Posterior vena cava (tissue), 2 donors: ENCODE measurements at regions of chr5 and their contacts with region 1.

Region 1: DNA sequence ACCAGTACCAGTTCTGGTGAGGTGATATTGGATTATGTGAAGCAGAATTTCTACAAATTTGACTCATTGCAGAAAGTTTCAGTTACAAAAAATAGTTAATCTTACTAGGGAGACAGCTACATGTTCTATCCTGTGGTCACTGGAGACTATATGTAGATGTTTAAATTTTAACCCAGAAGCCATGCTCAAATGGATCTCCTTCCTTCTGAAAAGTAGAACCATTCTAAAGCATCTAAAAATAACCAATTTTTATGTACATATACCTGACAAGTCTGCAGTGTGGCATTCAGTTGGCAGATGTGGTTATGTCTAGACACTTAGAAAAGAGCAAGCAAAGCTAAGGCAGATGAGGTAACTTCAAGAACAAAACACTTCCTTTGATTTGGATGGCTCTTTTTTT is 65.5 kb upstream of the POU4F3 start:
- DNase-seq: no peak

Region 2: DNA sequence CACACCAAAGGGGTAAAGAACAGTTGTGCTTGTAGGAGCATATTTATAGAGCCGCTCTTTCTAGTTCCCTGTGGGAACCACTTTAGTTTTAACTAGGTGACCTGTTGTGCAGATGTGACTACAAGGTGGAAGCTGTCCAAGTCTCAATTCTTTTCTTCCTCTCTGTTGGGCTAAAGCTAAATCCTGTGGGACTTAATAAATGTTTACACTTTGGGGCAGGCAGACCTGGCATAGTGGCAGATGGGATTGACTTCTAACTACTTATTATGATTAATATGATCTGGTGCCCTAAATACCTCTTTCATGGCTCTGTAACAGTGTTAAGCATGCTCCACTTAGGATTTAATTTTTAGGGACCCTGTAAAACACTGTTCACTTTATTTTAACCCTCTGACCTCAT is 1837.1 kb before region 1 on chr5:
- intact Hi-C with region 1: no loop called
- DNase-seq: no peak

Region 3: GRCh38 chr5:145739840-145740239 is 533.3 kb before region 1 on chr5:
- intact Hi-C with region 1: no loop called
- DNase-seq: no peak

Region 4: GRCh38 chr5:146130440-146131045 is 142.6 kb before region 1 on chr5:
- intact Hi-C with region 1: loop called in 1 of 2 experiments (anchors 10 kb)
- DNase-seq: no peak

Region 5: GRCh38 chr5:146151970-146152369 is 121.1 kb before region 1 on chr5:
- intact Hi-C with region 1: loop called in 1 of 2 experiments (anchors 10 kb)
- DNase-seq: no peak